Breast epithelium (tissue), 4 donors: ENCODE measurements at regions of chrX and their contacts with region 1.

Region 1: DNA sequence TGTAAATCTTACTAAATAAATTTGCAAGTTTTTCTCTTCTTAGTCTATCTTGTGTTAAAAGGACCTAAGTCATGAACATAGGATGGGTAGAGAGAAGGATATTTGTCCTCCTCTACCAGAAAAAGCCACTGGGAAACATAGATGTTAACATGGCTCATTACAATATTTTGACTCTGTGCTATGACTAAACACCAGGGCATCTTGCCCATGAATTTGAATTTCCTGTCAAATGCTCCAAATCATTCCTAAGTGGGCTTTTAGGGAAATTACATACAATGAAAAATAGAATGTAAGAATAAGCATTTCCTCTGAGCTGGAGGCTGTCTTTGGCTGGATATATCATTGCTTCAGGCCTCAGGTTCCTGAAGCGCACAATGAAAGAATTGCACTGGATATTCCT is 39.1 kb downstream of the ANOS1 start:
- DNase-seq: no peak
- H3K4me3 ChIP-seq: no peak overlapping the region
- H3K27ac ChIP-seq: no peak overlapping the region
- H3K4me1 ChIP-seq: no peaks in the 10 kb centered on the region
- H3K27me3 ChIP-seq: no peaks in the 10 kb centered on the region
- CTCF ChIP-seq: no peak
- POLR2A ChIP-seq: no peak

Region 2: GRCh38 chrX:8649969-8650368 is 42.9 kb before region 1 on chrX:
- intact Hi-C with region 1: loop called (anchors 2 kb)
- DNase-seq: no peak
- H3K4me3 ChIP-seq: no peak overlapping the region
- H3K27ac ChIP-seq: no peak overlapping the region
- H3K4me1 ChIP-seq: no peaks in the 10 kb centered on the region
- H3K27me3 ChIP-seq: no peaks in the 10 kb centered on the region
- CTCF ChIP-seq: no peak
- POLR2A ChIP-seq: no peak

Region 3: GRCh38 chrX:8743126-8743732 is 50.4 kb after region 1 on chrX:
- intact Hi-C with region 1: no loop called
- DNase-seq: no peak
- H3K4me3 ChIP-seq: no peak overlapping the region
- H3K27ac ChIP-seq: no peak overlapping the region
- H3K4me1 ChIP-seq: no peaks in the 10 kb centered on the region
- H3K27me3 ChIP-seq: peaks cover 0 to 13% of the 10 kb centered on the region in 2 donors
- CTCF ChIP-seq: peak; percentile 30 to 44 (median 43)
- POLR2A ChIP-seq: no peak